RWPE1 (cell line): ENCODE measurements at regions of chr19 and their contacts with region 1.

Region 1: GRCh38 chr19:2475702-2476450 is at the start of gene GADD45B:
- DNase-seq: peak; percentile 100
- H3K27ac ChIP-seq: peak within 1 kb of the TSS; percentile 98
- CTCF ChIP-seq: no peak

Region 2: GRCh38 chr19:2461751-2462634 is 13.9 kb before region 1 on chr19:
- CTCF ChIA-PET with region 1: no interaction called
- POLR2A ChIA-PET with region 1: no interaction called
- DNase-seq: peak; percentile 41
- H3K27ac ChIP-seq: peak overlapping the region; percentile 89
- CTCF ChIP-seq: no peak

Region 3: DNA sequence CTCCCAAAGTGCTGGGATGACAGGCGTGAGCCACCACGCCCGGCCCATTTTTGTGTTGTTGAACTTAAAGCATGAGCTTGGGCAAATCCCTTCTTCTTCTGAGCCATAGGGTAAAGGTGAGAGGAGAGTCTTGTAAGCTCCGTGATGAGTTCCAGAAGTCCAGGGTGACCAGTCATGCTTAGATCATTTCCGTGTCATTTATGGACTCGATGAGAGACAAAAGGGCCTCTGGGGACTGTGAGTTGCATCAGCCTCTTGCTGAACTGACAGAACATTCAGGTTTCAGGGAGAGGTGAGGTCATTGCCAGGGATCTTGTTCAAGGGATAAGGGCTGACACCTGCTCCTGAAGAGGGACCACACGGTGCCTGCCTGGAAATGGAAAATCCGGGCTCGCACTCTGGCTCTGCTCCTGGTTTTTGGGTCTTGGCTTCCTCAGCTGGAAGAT is 53.6 kb after region 1 on chr19:
- CTCF ChIA-PET with region 1: interaction called, 4 read pairs
- POLR2A ChIA-PET with region 1: interaction called, 13 read pairs
- DNase-seq: peak; percentile 88
- H3K27ac ChIP-seq: peak overlapping the region; percentile 77
- CTCF ChIP-seq: no peak

Region 4: GRCh38 chr19:2543463-2544442 is 67.9 kb after region 1 on chr19:
- CTCF ChIA-PET with region 1: interaction called, 5 read pairs
- POLR2A ChIA-PET with region 1: interaction called, 10 read pairs
- DNase-seq: peak; percentile 89
- H3K27ac ChIP-seq: peak overlapping the region; percentile 99
- CTCF ChIP-seq: peak; percentile 53

Region 5: GRCh38 chr19:2561895-2562294 is 86.0 kb after region 1 on chr19:
- CTCF ChIA-PET with region 1: no interaction called
- POLR2A ChIA-PET with region 1: no interaction called
- DNase-seq: no peak
- H3K27ac ChIP-seq: no peak overlapping the region
- CTCF ChIP-seq: no peak

Region 6: GRCh38 chr19:2578901-2579677 is 103.2 kb after region 1 on chr19:
- CTCF ChIA-PET with region 1: interaction called, 14 read pairs
- POLR2A ChIA-PET with region 1: interaction called, 31 read pairs
- DNase-seq: peak; percentile 76
- H3K27ac ChIP-seq: peak overlapping the region; percentile 94
- CTCF ChIP-seq: peak; percentile 88

Region 7: DNA sequence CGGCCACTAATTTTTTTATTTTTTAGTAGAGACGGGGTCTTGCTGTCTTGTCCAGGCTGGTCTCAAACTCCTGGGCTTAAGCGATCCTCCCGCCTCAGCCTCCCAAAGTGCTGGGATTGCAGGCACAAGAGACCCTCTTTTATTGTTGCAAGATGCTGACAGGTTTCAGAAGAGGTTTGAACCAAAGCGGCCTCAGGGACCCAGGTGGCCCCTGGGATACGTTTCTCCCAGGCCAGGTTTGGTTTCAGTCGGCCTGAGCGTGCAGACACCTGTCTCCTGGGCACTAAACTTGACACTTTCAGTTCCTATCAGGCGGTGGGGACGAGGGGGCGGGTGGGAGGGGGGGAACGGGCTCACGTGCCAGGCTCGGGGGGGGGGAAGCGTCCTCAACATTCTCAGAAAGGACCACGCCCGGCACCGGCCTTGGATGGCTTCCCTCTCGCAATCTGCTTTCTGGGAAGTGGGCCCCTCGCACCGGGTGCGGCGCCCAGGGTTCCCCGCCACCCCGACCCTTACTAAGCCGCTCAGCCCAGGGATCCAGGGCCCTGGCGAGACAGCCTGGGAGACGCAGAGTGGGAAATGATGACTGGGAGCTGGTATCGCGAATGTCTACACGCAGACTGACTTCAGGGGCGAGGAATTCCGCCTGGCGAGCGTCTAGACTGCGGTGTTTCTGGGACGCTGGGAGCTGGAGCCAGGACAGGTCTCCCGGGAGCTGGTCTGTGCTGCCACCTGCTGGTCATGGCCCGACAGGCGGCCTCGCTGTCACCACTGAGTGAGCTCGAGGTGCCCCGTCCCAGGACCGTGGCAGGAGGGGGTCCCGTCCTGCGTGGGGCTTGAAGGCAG is 135.0 kb after region 1 on chr19:
- CTCF ChIA-PET with region 1: interaction called, 25 read pairs
- POLR2A ChIA-PET with region 1: interaction called, 5 read pairs
- DNase-seq: peak; percentile 78
- H3K27ac ChIP-seq: peak overlapping the region; percentile 84
- CTCF ChIP-seq: peak; percentile 94

Region 8: GRCh38 chr19:2636897-2637683 is 161.2 kb after region 1 on chr19:
- CTCF ChIA-PET with region 1: interaction called, 11 read pairs
- POLR2A ChIA-PET with region 1: interaction called, 3 read pairs
- DNase-seq: peak; percentile 75
- H3K27ac ChIP-seq: peak overlapping the region; percentile 38
- CTCF ChIP-seq: peak; percentile 93